ENCODE measurements at regions of chr6 and their contacts with region 1.

Region 1: DNA sequence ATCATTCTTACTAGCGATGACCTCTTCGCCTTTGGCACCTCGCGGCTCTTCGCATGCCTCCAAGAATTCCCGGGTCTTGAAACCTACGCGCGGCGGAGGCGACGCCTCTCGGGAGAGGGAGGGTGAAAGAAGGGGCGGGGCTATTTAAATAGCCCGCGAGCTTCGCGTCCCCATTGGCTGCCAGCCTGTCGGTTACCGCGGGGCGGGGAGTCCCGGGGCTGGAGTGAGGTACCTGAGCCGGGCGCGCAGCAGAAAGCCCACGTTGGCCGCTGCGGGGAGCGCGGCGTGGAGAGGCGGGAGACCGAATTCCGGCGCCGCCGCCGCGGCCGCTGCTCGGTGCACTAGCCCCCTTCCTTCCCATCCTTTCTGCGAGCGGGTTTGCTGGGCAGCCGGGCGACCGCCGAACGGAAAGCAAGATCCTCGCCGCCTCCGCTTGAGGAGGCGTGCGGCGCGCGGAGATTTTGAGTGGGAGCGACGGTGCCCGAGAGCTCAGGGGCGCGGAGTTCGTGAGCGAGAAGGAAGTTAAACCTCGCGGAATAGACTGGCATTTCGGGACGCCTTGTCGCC is at the start of gene BMP6:
- DNase-seq: peak; percentile 78 to 90
- H3K4me3 ChIP-seq: peak within 1 kb of the TSS; percentile 71
- H3K27ac ChIP-seq: no peak within 1 kb of the TSS
- H3K4me1 ChIP-seq: peaks cover 27% of the 10 kb centered on the region
- H3K27me3 ChIP-seq: 0 out of 2 replicates have a peak, but pooled peaks cover 4% of the 10 kb centered on the region
- CTCF ChIP-seq: no peak
- total RNA-seq, gene BMP6: not detected in 2 replicates

Region 2: DNA sequence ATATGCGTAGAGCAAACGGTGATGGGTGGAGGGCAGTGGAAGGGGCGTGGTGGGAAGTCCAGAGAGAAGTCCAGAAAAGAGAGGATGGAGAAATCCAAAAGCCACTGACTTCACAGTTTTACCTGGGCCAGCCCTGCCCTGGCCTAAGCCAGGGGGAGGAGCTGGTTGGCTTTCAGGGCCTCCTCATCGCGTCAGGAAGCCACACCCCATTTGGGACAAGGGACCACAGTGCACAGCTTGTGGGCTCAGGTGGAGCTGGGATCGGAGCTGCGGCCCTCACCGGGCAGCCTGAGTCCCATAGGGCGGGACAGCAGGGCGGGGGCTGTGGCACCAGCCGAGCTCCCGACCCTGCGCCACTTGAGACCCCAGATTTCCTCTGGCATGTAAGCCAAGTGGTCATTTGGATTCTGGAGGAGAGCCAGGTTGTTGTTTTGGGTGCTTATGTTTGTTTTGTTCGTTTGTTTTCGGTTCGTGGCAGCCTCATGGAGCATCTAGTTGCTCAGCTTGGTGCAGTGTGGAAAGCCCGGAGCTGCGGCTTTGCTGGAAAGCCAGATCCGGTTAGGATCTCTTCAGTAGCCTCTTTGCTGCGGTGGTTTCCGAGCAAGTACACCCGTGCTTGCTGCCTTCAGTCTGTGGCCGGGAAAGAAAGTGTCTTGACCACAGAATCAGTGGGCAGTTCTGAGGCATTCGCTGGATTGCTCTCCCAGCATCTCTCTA is 294.1 kb before region 1 on chr6:
- CTCF ChIA-PET with region 1: interaction called, 15 read pairs
- POLR2A ChIA-PET with region 1: no interaction called
- intact Hi-C with region 1: no loop called
- DNase-seq: no peak
- H3K4me3 ChIP-seq: no peak overlapping the region
- H3K27ac ChIP-seq: no peak overlapping the region
- H3K4me1 ChIP-seq: no peaks in the 10 kb centered on the region
- H3K27me3 ChIP-seq: no peaks in the 10 kb centered on the region
- CTCF ChIP-seq: no peak

Region 3: GRCh38 chr6:7910654-7911344 is 184.9 kb after region 1 on chr6 and contains the start of gene TXNDC5:
- CTCF ChIA-PET with region 1: no interaction called
- POLR2A ChIA-PET with region 1: no interaction called
- intact Hi-C with region 1: loop called (anchors 5 kb)
- DNase-seq: peak in 1 of 2 experiments; percentile 76
- H3K4me3 ChIP-seq: peak within 1 kb of the TSS; percentile 75
- H3K27ac ChIP-seq: peak within 1 kb of the TSS; percentile 41
- H3K4me1 ChIP-seq: peaks cover 14% of the 10 kb centered on the region; the same call in 1 of the 2 replicates
- H3K27me3 ChIP-seq: no peaks in the 10 kb centered on the region
- CTCF ChIP-seq: no peak
- total RNA-seq, gene TXNDC5: 74.8 and 80.5 TPM in 2 replicates

Region 4: DNA sequence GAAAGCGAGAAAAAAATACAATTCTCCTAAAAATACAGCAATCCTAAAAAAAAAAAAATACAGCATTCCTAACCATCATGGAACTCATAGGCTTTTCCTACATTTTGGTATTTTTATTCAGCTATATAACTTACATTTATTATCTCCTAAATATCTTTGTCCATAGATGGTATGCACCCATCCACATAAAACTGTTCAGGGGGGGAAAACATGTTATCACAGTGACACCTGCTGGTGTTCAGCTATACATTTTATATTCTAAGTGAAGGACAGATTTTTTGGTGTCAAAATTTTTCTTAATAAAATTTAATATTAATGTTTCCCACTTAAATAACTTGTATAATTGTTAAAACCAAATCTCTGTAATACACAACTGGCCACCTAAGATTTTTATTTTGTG is 280.3 kb after region 1 on chr6:
- CTCF ChIA-PET with region 1: interaction called, 6 read pairs
- POLR2A ChIA-PET with region 1: no interaction called
- intact Hi-C with region 1: loop called (anchors 1 kb)
- DNase-seq: no peak
- H3K4me3 ChIP-seq: no peak overlapping the region
- H3K27ac ChIP-seq: no peak overlapping the region
- H3K4me1 ChIP-seq: no peaks in the 10 kb centered on the region
- H3K27me3 ChIP-seq: no peaks in the 10 kb centered on the region
- CTCF ChIP-seq: peak; percentile 61

Region 5: DNA sequence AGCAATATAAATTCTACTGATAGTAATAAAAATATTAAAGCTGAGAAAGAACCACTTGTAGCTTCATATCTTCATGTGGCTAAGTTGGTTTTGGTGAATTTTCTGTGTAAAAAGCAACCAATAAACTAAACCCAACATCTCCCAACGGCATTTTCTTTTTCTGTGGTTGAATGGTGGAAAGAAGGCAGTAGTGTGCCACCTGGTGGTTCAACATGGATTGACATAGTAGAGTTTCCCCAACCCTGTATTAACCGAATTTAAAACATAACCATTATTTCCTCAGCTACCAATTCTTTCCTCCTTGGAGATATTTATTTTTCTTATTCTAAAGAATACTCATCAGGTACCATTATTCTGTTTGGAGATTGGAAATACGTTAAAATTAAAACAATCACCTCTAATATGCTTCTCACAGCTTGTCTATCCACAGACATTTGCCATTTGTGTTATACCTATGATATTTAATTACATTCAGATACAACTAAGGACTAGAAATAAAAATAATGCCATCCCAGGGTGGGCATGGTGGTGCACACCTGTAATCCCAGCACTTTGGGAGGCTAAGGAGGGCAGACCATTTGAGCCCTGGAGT is 493.5 kb after region 1 on chr6:
- CTCF ChIA-PET with region 1: no interaction called
- POLR2A ChIA-PET with region 1: no interaction called
- intact Hi-C with region 1: loop called (anchors 1 kb)
- DNase-seq: peak in 1 of 2 experiments; percentile 33
- H3K4me3 ChIP-seq: no peak overlapping the region
- H3K27ac ChIP-seq: no peak overlapping the region
- H3K4me1 ChIP-seq: no peaks in the 10 kb centered on the region
- H3K27me3 ChIP-seq: no peaks in the 10 kb centered on the region
- CTCF ChIP-seq: peak; percentile 72

Measured in PC-9 (cell line).